Activated naive CD8-positive, alpha-beta T cell treated with anti-CD3 and anti-CD28 coated beads, Interleukin-2, amount 10 ng/mL, durations not matched to agents 7 days and 5 days (primary cell): ENCODE measurements at regions of chr20 and their contacts with region 1.

Region 1: DNA sequence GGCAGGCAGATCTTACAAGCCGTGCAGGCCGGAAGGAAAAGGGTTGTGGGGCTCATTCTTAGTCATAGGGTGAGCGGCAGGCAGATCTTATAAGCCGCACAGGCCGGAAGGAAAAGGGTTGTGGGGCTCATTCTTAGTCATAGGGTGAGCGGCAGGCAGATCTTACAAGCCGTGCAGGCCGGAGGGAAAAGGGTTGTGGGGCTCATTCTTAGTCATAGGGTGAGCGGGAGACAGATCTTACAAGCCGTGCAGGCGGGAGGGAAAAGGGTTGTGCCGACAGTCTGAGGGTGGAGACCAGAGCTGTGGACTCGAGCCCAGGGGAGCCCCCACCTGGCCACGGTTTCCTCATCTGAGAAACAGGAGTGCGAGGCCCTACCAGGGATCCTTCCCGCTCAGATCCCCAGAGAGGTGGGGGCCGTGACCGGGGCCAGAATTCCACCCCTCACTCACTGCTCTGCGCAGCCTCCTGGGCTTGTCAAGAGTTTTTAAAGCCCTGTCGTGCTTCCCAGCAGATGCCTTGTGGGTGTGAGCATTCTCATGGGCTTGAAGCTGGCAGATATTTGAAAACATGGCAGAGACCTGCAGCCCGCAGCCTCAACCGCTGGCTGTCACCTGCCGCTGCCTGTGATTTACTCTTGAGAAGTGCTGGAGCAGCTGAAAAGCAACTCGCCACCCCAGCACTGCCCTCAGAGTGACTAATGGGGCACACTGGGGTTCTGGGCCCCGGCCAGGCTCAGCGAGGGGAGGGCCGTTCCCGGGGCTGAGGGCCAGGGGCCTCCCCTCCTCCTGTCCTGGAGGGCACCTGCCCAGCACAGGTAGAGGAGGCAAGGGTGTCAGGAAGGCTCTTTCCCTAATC is 31.9 kb downstream of the NTSR1 start:
- DNase-seq: peak; percentile 74
- ATAC-seq: peak; percentile 83
- H3K4me3 Mint-ChIP-seq: peak overlapping the region; percentile 71
- H3K27ac Mint-ChIP-seq: peak overlapping the region; percentile 96
- H3K4me1 Mint-ChIP-seq: peaks cover 32% of the 10 kb centered on the region
- H3K27me3 Mint-ChIP-seq: peaks cover 3% of the 10 kb centered on the region

Region 2: GRCh38 chr20:62697468-62697912 is 43.0 kb before region 1 on chr20:
- POLR2A ChIA-PET with region 1: no interaction called
- DNase-seq: no peak
- ATAC-seq: no peak
- H3K4me3 Mint-ChIP-seq: no peak overlapping the region
- H3K27ac Mint-ChIP-seq: no peak overlapping the region
- H3K4me1 Mint-ChIP-seq: peaks cover 6% of the 10 kb centered on the region
- H3K27me3 Mint-ChIP-seq: peaks cover 2% of the 10 kb centered on the region

Region 3: GRCh38 chr20:62728028-62728780 is 12.3 kb before region 1 on chr20:
- POLR2A ChIA-PET with region 1: interaction called, 10 read pairs
- DNase-seq: no peak
- ATAC-seq: peak; percentile 44
- H3K4me3 Mint-ChIP-seq: peak overlapping the region; percentile 74
- H3K27ac Mint-ChIP-seq: peak overlapping the region; percentile 94
- H3K4me1 Mint-ChIP-seq: peaks cover 21% of the 10 kb centered on the region
- H3K27me3 Mint-ChIP-seq: peaks cover 6% of the 10 kb centered on the region